ENCODE measurements at regions of chr4 and their contacts with region 1.

Region 1: GRCh38 chr4:139609647-139610046 is 53.6 kb upstream of the SETD7 start:
- DNase-seq: no peak
- ATAC-seq: peak; percentile 55; the same call in 2 of the 3 replicates
- H3K4me3 ChIP-seq: no peak overlapping the region
- H3K27ac ChIP-seq: no peak overlapping the region
- H3K4me1 ChIP-seq: no peaks in the 10 kb centered on the region
- H3K27me3 ChIP-seq: peaks cover 0 to 3% of the 10 kb centered on the region in 2 experiments; a peak in 2 of 5 replicates
- CTCF ChIP-seq: no peak
- EP300 ChIP-seq: no peak
- POLR2A ChIP-seq: no peak
- RAD21 ChIP-seq: no peak

Region 2: DNA sequence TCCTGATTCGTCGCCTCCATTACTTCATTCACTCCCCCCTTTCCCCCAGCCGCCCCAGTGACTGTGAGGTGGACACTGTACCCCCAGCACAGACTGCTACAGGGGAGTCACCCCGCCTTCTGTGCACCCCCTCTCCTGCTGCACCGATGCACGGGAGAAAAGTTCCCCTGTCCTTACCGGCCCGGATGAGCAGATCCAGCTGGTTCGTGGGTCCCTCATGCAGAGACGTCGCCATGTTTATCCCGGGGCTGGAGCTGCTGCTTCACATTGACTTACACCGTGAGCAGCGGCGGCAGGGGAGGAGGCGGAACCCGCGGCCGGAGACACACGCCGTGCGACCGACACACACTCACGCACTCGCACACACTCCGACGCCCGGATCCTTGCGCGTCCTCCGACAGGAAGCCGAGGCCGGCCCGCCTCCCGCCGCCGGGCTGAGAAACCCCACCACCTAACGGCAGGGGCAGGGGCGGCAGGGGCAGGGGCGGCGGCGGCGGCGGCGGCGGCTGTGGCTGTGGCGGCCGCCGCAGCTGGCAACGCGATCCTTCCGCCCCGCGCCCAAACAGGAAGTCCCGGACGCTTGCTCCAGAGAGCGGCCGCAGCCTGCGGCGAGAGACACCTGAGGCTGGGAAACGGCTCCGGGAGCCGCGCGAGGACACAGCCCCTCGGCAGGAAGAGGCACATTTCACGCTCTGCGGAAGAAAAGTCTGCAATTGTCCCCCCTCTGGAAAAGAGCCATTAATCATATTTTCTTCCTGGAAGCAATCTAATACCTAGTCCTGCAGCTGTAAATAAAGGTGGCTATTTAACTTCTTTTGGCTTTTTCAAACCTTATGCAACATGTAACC is 525.5 kb before region 1 on chr4:
- CTCF ChIA-PET with region 1: no interaction called
- POLR2A ChIA-PET with region 1: no interaction called
- in situ Hi-C with region 1: no loop called
- intact Hi-C with region 1: loop called (anchors 5 kb)
- DNase-seq: peak; percentile 89
- ATAC-seq: peak; percentile 79
- H3K4me3 ChIP-seq: peak overlapping the region; percentile 69 to 95 (median 71)
- H3K27ac ChIP-seq: peak overlapping the region; percentile 94
- H3K4me1 ChIP-seq: peaks cover 34% of the 10 kb centered on the region
- H3K27me3 ChIP-seq: no peaks in the 10 kb centered on the region; a peak in 1 of 5 replicates
- CTCF ChIP-seq: peak; percentile 49; the same call in 1 of the 2 replicates
- EP300 ChIP-seq: no peak
- POLR2A ChIP-seq: peak; percentile 72 to 82
- RAD21 ChIP-seq: peak; percentile 22; the same call in 1 of the 2 replicates

Region 3: DNA sequence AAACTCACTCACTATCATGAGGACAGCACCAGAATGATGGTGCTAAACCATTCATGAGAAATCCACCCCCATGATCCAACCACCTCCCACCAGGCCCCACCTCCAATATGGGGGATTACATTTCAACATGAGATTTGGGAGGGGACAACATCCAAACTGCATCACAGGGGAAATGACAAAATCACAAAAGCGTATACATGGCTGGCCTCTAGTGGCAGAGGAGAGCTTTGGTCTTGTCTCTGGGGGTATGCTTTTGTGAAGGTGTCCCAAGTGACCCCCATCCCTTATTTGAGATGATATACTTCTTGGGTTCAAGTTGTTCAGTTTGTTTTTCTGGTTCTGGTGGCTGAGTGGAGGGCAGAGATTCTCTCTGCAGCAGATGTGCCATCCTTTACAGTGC is 45.1 kb before region 1 on chr4:
- CTCF ChIA-PET with region 1: no interaction called
- POLR2A ChIA-PET with region 1: no interaction called
- in situ Hi-C with region 1: no loop called
- intact Hi-C with region 1: no loop called
- DNase-seq: no peak
- ATAC-seq: no peak
- H3K4me3 ChIP-seq: no peak overlapping the region
- H3K27ac ChIP-seq: no peak overlapping the region
- H3K4me1 ChIP-seq: no peaks in the 10 kb centered on the region
- H3K27me3 ChIP-seq: peaks cover 0 to 11% of the 10 kb centered on the region in 2 experiments; a peak in 3 of 5 replicates
- CTCF ChIP-seq: peak; percentile 15; the same call in 1 of the 2 replicates
- EP300 ChIP-seq: no peak
- POLR2A ChIP-seq: no peak
- RAD21 ChIP-seq: no peak